SK-N-SH (cell line): ENCODE measurements at regions of chr4 and their contacts with region 1.

Region 1: GRCh38 chr4:20544645-20545044 is 155.6 kb upstream of the PACRGL start:
- DNase-seq: peak; percentile 44
- H3K4me3 ChIP-seq: no peak overlapping the region; a peak in 1 of 4 replicates
- H3K27ac ChIP-seq: no peak overlapping the region
- H3K4me1 ChIP-seq: no peaks in the 10 kb centered on the region
- H3K27me3 ChIP-seq: no peaks in the 10 kb centered on the region
- CTCF ChIP-seq: peak; percentile 80
- EP300 ChIP-seq: no peak
- RAD21 ChIP-seq: peak; percentile 91

Region 2: GRCh38 chr4:20305976-20306375 is 238.7 kb before region 1 on chr4:
- CTCF ChIA-PET with region 1: interaction called, 15 read pairs
- POLR2A ChIA-PET with region 1: no interaction called
- DNase-seq: peak; percentile 40
- H3K4me3 ChIP-seq: no peak overlapping the region
- H3K27ac ChIP-seq: no peak overlapping the region
- H3K4me1 ChIP-seq: no peaks in the 10 kb centered on the region; a peak in 1 of 4 replicates
- H3K27me3 ChIP-seq: no peaks in the 10 kb centered on the region
- CTCF ChIP-seq: peak; percentile 64
- EP300 ChIP-seq: no peak
- RAD21 ChIP-seq: peak; percentile 81

Region 3: GRCh38 chr4:20422398-20422797 is 122.2 kb before region 1 on chr4:
- CTCF ChIA-PET with region 1: interaction called, 29 read pairs
- POLR2A ChIA-PET with region 1: no interaction called
- DNase-seq: peak; percentile 46
- H3K4me3 ChIP-seq: no peak overlapping the region
- H3K27ac ChIP-seq: no peak overlapping the region
- H3K4me1 ChIP-seq: peaks cover 0 to 20% of the 10 kb centered on the region in 2 experiments
- H3K27me3 ChIP-seq: no peaks in the 10 kb centered on the region
- CTCF ChIP-seq: peak; percentile 62
- EP300 ChIP-seq: no peak
- RAD21 ChIP-seq: peak; percentile 78

Region 4: GRCh38 chr4:20428436-20429160 is 116.0 kb before region 1 on chr4:
- CTCF ChIA-PET with region 1: interaction called, 29 read pairs
- POLR2A ChIA-PET with region 1: no interaction called
- DNase-seq: no peak
- H3K4me3 ChIP-seq: no peak overlapping the region
- H3K27ac ChIP-seq: no peak overlapping the region
- H3K4me1 ChIP-seq: peaks cover 3 to 18% of the 10 kb centered on the region in 2 experiments; a peak in 3 of 4 replicates
- H3K27me3 ChIP-seq: no peaks in the 10 kb centered on the region
- CTCF ChIP-seq: peak; percentile 52
- EP300 ChIP-seq: no peak
- RAD21 ChIP-seq: peak; percentile 69

Region 5: GRCh38 chr4:20480165-20480947 is 64.3 kb before region 1 on chr4:
- CTCF ChIA-PET with region 1: interaction called, 10 read pairs
- POLR2A ChIA-PET with region 1: no interaction called
- DNase-seq: peak; percentile 9
- H3K4me3 ChIP-seq: no peak overlapping the region; a peak in 1 of 4 replicates
- H3K27ac ChIP-seq: no peak overlapping the region
- H3K4me1 ChIP-seq: peaks cover 0 to 3% of the 10 kb centered on the region in 2 experiments; a peak in 2 of 4 replicates
- H3K27me3 ChIP-seq: no peaks in the 10 kb centered on the region
- CTCF ChIP-seq: no peak
- EP300 ChIP-seq: peak in 1 of 2 experiments; percentile 42; a peak in 1 of 4 replicates
- RAD21 ChIP-seq: no peak

Region 6: GRCh38 chr4:20520901-20521300 is 23.7 kb before region 1 on chr4:
- CTCF ChIA-PET with region 1: interaction called, 12 read pairs
- POLR2A ChIA-PET with region 1: no interaction called
- DNase-seq: peak; percentile 8
- H3K4me3 ChIP-seq: no peak overlapping the region
- H3K27ac ChIP-seq: peak overlapping the region in 1 of 2 experiments; percentile 51; a peak in 3 of 4 replicates
- H3K4me1 ChIP-seq: peaks cover 0 to 6% of the 10 kb centered on the region in 2 experiments; a peak in 1 of 4 replicates
- H3K27me3 ChIP-seq: no peaks in the 10 kb centered on the region
- CTCF ChIP-seq: no peak
- EP300 ChIP-seq: peak in 1 of 2 experiments; percentile 31; a peak in 2 of 4 replicates
- RAD21 ChIP-seq: no peak